ENCODE measurements at regions of chr5 and their contacts with region 1.

Region 1: GRCh38 chr5:157245477-157245876 is 20.4 kb upstream of the CYFIP2 start:
- DNase-seq: no peak
- ATAC-seq: no peak
- H3K4me3 Mint-ChIP-seq: peak overlapping the region; percentile 12
- H3K27ac Mint-ChIP-seq: peak overlapping the region; percentile 88
- H3K4me1 Mint-ChIP-seq: peaks cover 89% of the 10 kb centered on the region
- H3K27me3 Mint-ChIP-seq: no peaks in the 10 kb centered on the region

Region 2: GRCh38 chr5:157189223-157189622 is 56.3 kb before region 1 on chr5:
- CTCF ChIA-PET with region 1: interaction called, 3 read pairs
- POLR2A ChIA-PET with region 1: interaction called, 3 read pairs
- intact Hi-C with region 1: loop called in 1 of 2 experiments (anchors 2 kb)
- DNase-seq: peak; percentile 71
- ATAC-seq: peak; percentile 59
- H3K4me3 Mint-ChIP-seq: peak overlapping the region; percentile 93
- H3K27ac Mint-ChIP-seq: peak overlapping the region; percentile 96
- H3K4me1 Mint-ChIP-seq: peaks cover 75% of the 10 kb centered on the region
- H3K27me3 Mint-ChIP-seq: no peaks in the 10 kb centered on the region

Region 3: DNA sequence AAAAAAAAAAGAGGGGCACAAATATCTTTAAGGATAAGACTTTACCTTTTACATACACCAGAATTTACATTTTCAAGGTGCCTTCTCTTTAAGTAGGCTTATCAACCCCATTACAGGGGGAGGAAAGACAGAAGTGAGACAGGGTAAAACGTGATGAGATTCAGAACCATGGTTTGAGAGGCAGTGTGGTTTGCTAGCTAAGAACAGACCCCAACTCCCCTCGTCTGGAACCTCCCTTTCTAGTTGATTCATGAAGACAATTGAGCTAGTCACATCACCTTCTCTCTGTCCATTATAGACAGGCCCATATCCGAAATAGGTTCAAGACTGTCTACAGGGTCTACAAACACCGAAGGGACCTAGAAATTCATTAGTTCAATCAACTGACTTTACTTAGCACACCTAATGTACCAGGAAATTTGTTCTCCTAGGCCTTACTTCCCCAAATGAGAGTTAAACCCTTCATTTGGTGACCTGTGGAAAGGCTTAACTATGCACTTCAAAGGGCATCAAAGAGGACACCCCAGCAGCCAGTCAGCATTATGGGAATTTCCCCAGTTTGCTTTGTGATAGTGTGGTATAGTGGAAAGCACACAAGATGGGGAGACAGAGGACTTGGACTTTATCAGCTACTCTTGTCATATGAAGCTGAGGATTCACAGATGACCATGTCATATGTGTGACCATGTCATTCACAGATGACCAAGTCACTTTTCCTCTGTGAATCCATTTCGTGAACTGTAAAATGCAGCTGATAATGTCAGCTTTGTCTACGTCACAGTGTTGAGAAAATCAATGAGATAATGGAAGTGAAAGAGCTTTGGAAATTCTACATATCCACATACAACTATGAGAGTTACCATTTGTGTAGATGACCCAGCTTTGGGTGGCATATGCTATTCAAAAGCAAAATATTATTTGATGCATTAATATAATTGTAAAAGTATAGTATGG is 19.7 kb before region 1 on chr5:
- CTCF ChIA-PET with region 1: interaction called, 4 read pairs
- POLR2A ChIA-PET with region 1: interaction called, 4 read pairs
- intact Hi-C with region 1: loop called (anchors 1 kb)
- DNase-seq: no peak
- ATAC-seq: peak; percentile 30
- H3K4me3 Mint-ChIP-seq: peak overlapping the region; percentile 77
- H3K27ac Mint-ChIP-seq: peak overlapping the region; percentile 96
- H3K4me1 Mint-ChIP-seq: peaks cover 73% of the 10 kb centered on the region
- H3K27me3 Mint-ChIP-seq: no peaks in the 10 kb centered on the region

Measured in activated CD4-positive, alpha-beta T cell treated with anti-CD3 and anti-CD28 coated beads for 36 hours (primary cell).